ENCODE measurements at regions of chr11 and their contacts with region 1.

Region 1: DNA sequence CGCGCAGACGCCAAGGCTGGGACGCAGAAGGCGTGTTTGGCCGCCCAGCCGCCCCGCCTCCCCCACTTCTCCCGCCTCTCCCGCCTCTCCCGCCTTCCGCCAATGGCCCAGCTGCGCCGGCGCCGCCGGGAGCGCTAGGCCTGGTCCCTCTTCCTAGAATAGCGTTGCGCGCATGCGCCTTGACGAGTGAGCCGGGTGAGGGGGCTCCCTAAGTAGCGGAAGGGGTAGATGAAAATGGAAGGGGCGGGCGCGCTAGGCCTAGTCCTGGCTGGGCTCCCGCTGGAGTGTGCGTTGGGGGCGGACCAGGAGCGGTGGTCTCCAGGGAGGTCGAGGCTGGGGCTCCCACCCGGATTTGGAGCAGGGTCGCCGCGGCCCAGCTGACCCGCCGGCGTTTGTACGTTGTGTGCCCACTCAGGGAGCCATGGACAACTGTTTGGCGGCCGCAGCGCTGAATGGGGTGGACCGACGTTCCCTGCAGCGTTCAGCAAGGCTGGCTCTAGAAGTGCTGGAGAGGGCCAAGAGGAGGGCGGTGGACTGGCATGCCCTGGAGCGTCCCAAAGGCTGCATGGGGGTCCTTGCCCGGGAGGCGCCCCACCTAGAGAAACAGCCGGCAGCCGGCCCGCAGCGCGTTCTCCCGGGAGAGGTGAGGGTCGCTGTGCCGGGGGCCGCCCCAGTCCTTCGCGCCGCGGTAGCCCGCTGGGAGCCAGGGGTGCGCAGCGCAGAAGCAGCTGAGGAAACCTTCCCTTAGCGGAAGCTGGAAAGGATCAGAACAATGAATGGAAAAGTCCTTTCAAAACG is at the start of gene AKIP1:
- DNase-seq: peak; percentile 91
- H3K4me3 ChIP-seq: peak within 1 kb of the TSS; percentile 83 to 94 (median 83)
- H3K27ac ChIP-seq: peak within 1 kb of the TSS; percentile 55
- H3K4me1 ChIP-seq: peaks cover 40% of the 10 kb centered on the region
- H3K27me3 ChIP-seq: no peaks in the 10 kb centered on the region
- CTCF ChIP-seq: no peak
- total RNA-seq, gene AKIP1: 31.7 to 35.2 TPM

Region 2: DNA sequence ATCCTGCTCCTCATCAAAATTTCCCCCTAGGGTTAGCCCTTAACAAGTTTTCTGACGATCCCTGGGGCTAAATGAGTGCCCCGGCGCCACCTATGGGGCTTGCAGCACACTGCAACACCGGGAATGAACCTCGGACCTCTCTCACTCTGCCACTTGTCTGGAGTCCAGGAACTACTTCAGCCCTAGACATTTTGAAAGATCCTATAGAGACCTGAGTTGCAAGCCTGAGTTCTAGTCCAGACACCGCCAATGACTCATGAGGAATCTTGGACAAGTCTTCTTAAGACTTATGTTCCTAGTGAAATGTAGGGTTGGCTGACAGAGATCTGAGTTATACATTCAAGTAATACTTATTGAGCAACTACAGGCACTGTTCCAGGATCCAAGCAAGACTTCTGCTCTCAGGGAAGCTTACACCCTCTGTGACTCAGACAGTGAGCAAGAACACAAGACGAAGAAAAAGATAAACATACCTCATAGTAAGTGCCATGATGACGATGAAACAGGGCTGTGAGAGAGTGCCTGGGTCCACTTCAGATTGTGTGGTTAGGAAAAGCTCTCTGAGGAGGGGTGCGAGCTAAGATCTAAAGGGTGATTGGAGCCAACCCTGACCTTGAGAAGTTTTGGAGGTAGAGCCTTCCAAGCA is 307.0 kb before region 1 on chr11:
- CTCF ChIA-PET with region 1: no interaction called
- dilution Hi-C with region 1: no loop called
- in situ Hi-C with region 1: no loop called
- intact Hi-C with region 1: loop called (anchors 5 kb)
- DNase-seq: peak; percentile 100
- H3K4me3 ChIP-seq: no peak overlapping the region
- H3K27ac ChIP-seq: peak overlapping the region; percentile 69
- H3K4me1 ChIP-seq: peaks cover 20% of the 10 kb centered on the region
- H3K27me3 ChIP-seq: no peaks in the 10 kb centered on the region
- CTCF ChIP-seq: peak; percentile 71 to 79

Region 3: GRCh38 chr11:8688414-8689362 is 222.5 kb before region 1 on chr11:
- CTCF ChIA-PET with region 1: no interaction called
- dilution Hi-C with region 1: no loop called
- in situ Hi-C with region 1: no loop called
- intact Hi-C with region 1: loop called (anchors 2 kb)
- DNase-seq: peak; percentile 95
- H3K4me3 ChIP-seq: peak overlapping the region; percentile 51 to 62 (median 52)
- H3K27ac ChIP-seq: peak overlapping the region; percentile 52
- H3K4me1 ChIP-seq: peaks cover 36% of the 10 kb centered on the region
- H3K27me3 ChIP-seq: no peaks in the 10 kb centered on the region
- CTCF ChIP-seq: peak in 1 of 2 donors; percentile 8

Region 4: GRCh38 chr11:8724682-8725081 is 186.5 kb before region 1 on chr11:
- CTCF ChIA-PET with region 1: interaction called, 15 read pairs
- dilution Hi-C with region 1: no loop called
- in situ Hi-C with region 1: no loop called
- intact Hi-C with region 1: no loop called
- DNase-seq: no peak
- H3K4me3 ChIP-seq: no peak overlapping the region
- H3K27ac ChIP-seq: no peak overlapping the region
- H3K4me1 ChIP-seq: peaks cover 28% of the 10 kb centered on the region
- H3K27me3 ChIP-seq: no peaks in the 10 kb centered on the region
- CTCF ChIP-seq: no peak

Region 5: DNA sequence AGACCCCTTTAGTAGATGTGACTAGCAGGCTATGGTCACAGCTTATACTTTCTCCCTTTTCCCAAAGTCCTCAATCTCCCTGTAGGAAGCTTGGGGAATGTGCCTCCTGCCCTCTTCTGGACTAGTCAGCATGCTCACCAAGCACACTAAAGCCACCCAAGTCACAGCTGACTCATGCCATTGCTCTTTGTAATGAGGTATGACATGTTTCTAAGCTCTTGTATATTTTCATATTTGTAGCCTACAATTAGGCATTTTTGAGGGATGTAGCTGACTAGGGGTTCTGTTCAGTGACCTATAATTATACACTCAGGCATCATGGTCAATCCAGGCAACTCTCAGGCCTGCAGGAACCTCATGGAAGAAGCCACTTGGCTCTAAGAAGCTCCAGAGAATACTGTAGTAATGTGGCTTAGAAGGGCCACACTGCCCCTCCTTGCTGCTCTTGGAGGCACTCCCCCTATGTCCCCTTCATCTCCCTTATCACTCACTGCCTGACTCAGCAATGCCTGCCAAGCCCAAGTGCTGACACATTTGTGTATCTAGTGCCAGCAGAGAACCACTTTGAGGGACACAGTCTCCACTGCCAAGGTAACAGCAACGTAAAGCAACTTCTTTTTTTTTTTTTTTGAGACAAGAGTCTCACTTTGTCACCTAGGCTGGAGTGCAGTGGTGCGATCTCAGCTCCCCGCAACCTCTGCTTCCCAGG is 142.4 kb before region 1 on chr11:
- CTCF ChIA-PET with region 1: interaction called, 6 read pairs
- dilution Hi-C with region 1: no loop called
- in situ Hi-C with region 1: no loop called
- intact Hi-C with region 1: loop called (anchors 2 kb)
- DNase-seq: peak; percentile 66
- H3K4me3 ChIP-seq: no peak overlapping the region
- H3K27ac ChIP-seq: peak overlapping the region; percentile 96
- H3K4me1 ChIP-seq: peaks cover 81% of the 10 kb centered on the region
- H3K27me3 ChIP-seq: no peaks in the 10 kb centered on the region
- CTCF ChIP-seq: peak; percentile 19 to 60

Region 6: GRCh38 chr11:8832571-8833260 is 78.5 kb before region 1 on chr11:
- CTCF ChIA-PET with region 1: interaction called, 8 read pairs
- dilution Hi-C with region 1: no loop called
- in situ Hi-C with region 1: no loop called
- intact Hi-C with region 1: loop called (anchors 5 kb)
- DNase-seq: peak; percentile 90
- H3K4me3 ChIP-seq: no peak overlapping the region
- H3K27ac ChIP-seq: peak overlapping the region; percentile 76
- H3K4me1 ChIP-seq: peaks cover 33% of the 10 kb centered on the region
- H3K27me3 ChIP-seq: no peaks in the 10 kb centered on the region
- CTCF ChIP-seq: no peak

Region 7: DNA sequence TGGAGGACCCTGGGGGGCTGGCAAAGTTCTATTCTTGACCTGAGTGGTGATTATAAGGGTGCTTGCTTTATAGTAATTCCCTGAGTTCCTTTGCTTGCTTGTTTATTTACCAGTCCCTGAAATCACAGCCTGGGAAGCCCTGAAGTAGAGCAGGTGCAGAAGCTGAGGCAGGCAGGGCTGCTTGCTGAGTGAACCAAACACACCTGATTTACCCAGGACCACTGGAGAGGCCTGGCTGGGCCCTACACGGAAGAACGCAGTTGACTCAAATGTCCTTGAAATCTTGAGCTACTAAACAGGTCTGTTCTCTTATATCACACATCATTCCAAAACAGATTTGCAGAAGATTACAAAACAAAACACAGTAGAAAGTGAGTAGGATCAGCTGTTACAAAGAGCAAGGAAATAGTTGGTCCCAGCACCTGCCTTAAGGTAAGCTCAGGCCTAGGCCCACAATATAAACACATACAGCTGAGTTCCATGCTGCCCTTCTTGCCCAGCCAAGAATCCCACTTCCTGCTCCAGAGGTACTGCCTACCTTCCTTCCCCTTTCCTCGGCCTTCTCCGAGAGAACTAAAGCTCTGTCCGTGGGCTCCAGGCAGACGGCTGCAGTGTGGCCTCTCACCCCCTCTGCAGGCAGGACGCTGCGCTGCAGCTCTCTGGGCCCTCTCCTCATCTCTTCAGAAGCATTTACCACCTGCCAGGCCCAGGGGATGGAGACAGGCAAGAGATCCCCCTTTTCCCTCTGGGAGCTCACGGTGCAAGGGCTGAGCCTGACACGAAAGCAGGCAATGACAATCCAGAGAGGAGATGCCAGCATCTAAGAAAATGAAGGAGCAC is 226.3 kb after region 1 on chr11:
- CTCF ChIA-PET with region 1: interaction called, 4 read pairs
- dilution Hi-C with region 1: no loop called
- in situ Hi-C with region 1: no loop called
- intact Hi-C with region 1: loop called (anchors 1 kb)
- DNase-seq: peak; percentile 68
- H3K4me3 ChIP-seq: no peak overlapping the region
- H3K27ac ChIP-seq: no peak overlapping the region
- H3K4me1 ChIP-seq: peaks cover 28% of the 10 kb centered on the region
- H3K27me3 ChIP-seq: no peaks in the 10 kb centered on the region
- CTCF ChIP-seq: peak; percentile 98 to 99